Activated CD4-positive, alpha-beta memory T cell treated with anti-CD3 and anti-CD28 coated beads for 36 hours (primary cell): ENCODE measurements at regions of chr9 and their contacts with region 1.

Region 1: GRCh38 chr9:36008774-36009300 is 27.9 kb upstream of the RECK start:
- DNase-seq: peak; percentile 72
- H3K4me3 Mint-ChIP-seq: no peak overlapping the region
- H3K27ac Mint-ChIP-seq: no peak overlapping the region
- H3K4me1 Mint-ChIP-seq: peaks cover 26% of the 10 kb centered on the region
- H3K27me3 Mint-ChIP-seq: peaks cover 28% of the 10 kb centered on the region

Region 2: GRCh38 chr9:35903049-35903448 is 105.8 kb before region 1 on chr9:
- CTCF ChIA-PET with region 1: interaction called, 11 read pairs
- POLR2A ChIA-PET with region 1: no interaction called
- intact Hi-C with region 1: no loop called
- DNase-seq: peak; percentile 31
- H3K4me3 Mint-ChIP-seq: no peak overlapping the region
- H3K27ac Mint-ChIP-seq: no peak overlapping the region
- H3K4me1 Mint-ChIP-seq: peaks cover 25% of the 10 kb centered on the region
- H3K27me3 Mint-ChIP-seq: peaks cover 4% of the 10 kb centered on the region

Region 3: GRCh38 chr9:35954942-35955546 is 53.8 kb before region 1 on chr9:
- CTCF ChIA-PET with region 1: interaction called, 25 read pairs
- POLR2A ChIA-PET with region 1: no interaction called
- intact Hi-C with region 1: loop called (anchors 5 kb)
- DNase-seq: peak; percentile 59
- H3K4me3 Mint-ChIP-seq: no peak overlapping the region
- H3K27ac Mint-ChIP-seq: no peak overlapping the region
- H3K4me1 Mint-ChIP-seq: peaks cover 6% of the 10 kb centered on the region
- H3K27me3 Mint-ChIP-seq: peaks cover 2% of the 10 kb centered on the region

Region 4: DNA sequence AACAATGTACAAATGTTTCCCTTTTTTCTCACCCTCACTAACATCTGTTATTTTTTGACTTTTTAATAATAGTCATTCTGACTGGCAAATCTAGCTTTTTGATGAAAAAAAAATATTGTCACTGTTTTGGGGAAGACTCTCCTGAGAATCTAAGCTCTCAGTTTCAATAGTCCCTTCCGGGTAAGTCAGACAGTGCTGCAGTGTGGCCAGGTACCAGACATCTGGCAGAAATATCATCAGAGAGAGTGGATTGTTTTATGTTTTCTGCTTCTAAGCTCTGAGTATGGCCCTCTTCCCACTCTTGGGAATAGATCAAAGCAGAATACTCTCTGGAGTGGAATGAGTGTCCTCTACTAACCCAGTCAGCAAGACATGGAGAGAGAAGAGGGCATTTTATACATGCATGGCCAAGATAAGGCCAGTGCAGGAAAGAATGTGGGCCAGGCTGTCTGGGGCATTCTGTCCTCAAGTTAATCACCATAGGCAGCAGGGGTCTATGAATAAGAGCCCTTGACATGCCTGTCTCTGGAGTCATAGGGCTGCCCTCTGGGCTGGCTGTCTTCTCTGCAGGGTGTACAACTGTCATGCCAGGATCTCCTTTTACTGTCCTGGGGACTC is 12.4 kb before region 1 on chr9:
- CTCF ChIA-PET with region 1: interaction called, 25 read pairs
- POLR2A ChIA-PET with region 1: no interaction called
- intact Hi-C with region 1: no loop called
- DNase-seq: no peak
- H3K4me3 Mint-ChIP-seq: no peak overlapping the region
- H3K27ac Mint-ChIP-seq: no peak overlapping the region
- H3K4me1 Mint-ChIP-seq: no peaks in the 10 kb centered on the region
- H3K27me3 Mint-ChIP-seq: peaks cover 21% of the 10 kb centered on the region

Region 5: DNA sequence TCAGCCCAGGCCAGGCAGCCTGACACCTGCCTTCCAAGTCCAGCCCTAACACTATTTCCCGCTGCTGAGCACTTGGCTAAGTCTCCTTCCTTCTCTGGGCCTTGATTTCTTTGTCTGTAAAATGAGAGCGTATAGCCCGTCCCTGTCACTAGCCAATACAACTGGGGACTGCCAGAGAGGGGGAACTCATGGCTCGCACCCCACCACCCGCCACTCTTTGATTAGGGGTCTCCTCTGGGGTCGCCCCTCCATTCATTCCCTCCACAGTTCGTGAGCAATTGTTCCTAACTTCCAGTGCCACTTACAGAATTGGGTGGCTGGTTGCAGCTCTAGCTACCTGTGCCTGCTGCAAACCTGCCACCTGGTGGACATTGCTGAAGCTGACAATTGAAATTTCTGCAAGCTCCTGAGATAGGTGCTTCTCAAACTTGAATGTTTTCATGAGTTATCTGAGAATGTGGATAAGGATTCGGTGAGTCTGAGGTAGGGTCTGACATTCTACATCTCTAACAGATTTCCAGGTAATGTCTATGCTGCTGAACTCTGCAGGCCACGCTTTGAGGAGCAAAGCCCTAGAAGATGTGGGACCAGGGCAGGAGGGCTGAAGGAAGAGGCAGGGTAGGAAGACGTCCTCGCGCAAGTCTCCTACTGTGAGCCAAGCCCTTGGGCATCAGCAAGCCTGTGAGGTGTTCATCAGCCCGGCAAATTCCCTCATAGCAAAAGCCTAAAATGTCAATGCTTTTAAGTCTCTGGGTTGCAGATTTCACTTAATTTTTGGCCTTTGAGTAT is 14.6 kb after region 1 on chr9:
- CTCF ChIA-PET with region 1: interaction called, 112 read pairs
- POLR2A ChIA-PET with region 1: no interaction called
- intact Hi-C with region 1: loop called (anchors 2 kb)
- DNase-seq: peak; percentile 77
- H3K4me3 Mint-ChIP-seq: no peak overlapping the region
- H3K27ac Mint-ChIP-seq: no peak overlapping the region
- H3K4me1 Mint-ChIP-seq: no peaks in the 10 kb centered on the region
- H3K27me3 Mint-ChIP-seq: no peaks in the 10 kb centered on the region

Region 6: DNA sequence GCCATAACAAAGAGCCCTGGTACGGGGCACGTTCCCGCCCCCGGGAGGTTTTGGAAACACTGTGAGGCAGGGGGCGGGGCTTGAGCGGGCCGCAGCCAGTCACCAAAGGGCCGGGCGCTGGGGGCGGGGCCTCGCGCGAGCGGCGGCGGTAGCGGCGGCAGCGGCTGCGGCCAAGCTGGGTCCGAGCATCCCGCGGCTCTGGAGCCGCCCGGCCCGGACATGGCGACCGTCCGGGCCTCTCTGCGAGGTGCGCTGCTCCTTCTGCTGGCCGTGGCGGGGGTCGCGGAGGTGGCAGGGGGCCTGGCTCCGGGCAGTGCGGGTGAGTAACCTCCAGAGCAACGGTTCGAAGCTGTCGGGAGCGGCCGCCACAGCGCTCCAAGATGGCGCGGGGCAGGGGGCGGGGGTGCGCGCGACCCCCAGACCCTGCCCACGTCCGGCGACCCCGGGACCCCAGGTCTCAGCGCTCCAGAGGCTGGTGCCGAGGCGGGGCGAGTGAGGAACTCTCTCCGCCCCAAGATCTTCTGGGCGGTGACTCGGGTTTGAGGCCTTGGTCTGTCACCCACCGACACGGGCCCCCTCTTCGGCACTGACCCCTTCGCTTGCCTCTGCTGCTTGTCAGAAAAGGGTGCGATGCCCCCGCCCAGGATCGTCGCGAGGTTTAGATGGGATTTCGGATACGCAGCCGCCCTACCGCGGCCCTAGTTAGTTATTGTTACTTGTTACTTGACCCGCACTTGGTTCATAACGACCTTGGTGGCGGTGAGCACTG is 28.1 kb after region 1 on chr9 and contains the start of gene RECK:
- CTCF ChIA-PET with region 1: interaction called, 26 read pairs
- POLR2A ChIA-PET with region 1: no interaction called
- intact Hi-C with region 1: loop called (anchors 2 kb)
- DNase-seq: peak; percentile 93
- H3K4me3 Mint-ChIP-seq: peak within 1 kb of the TSS; percentile 81
- H3K27ac Mint-ChIP-seq: peak within 1 kb of the TSS; percentile 2
- H3K4me1 Mint-ChIP-seq: peaks cover 37% of the 10 kb centered on the region
- H3K27me3 Mint-ChIP-seq: peaks cover under 1% of the 10 kb centered on the region
- total RNA-seq, gene RECK: 6.1 to 7.2 TPM

Region 7: DNA sequence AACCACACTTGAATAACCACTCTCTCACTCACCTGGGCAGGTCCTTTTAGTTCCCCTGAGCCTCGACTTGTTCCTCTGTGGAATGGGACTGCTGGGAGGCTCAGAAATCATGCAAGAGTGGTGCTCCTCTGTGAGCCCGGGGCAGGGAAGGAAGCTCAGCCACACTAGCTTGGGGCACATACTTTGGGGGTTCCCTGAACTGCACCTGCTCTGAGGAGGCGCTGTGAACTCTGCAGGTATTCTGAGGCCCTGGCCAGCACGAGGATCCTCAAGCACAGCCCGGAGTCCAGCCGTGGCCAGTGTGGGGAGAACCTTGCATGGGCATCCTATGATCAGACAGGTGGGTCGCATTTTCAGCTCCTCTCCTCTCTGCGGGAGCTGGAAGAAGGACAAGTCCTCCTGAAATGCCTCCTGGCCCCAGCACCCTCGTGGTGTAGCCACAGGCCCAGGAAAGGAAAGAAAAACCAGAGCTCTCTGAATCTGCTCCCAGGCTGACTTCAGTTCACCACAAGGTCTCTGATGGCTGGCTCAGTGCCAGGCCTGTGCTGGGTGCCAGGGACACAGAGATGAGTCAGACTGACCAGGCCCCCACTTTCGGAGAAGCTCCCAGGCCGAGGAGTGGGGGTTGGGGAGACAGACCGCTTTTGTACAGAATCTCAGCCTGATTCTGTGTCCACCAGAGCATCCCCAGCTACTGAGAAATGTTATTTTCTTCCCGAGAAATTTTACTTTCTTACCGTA is 139.6 kb after region 1 on chr9:
- CTCF ChIA-PET with region 1: no interaction called
- POLR2A ChIA-PET with region 1: no interaction called
- intact Hi-C with region 1: loop called (anchors 5 kb)
- DNase-seq: peak; percentile 88
- H3K4me3 Mint-ChIP-seq: no peak overlapping the region
- H3K27ac Mint-ChIP-seq: peak overlapping the region; percentile 30
- H3K4me1 Mint-ChIP-seq: peaks cover 84% of the 10 kb centered on the region
- H3K27me3 Mint-ChIP-seq: no peaks in the 10 kb centered on the region

Region 8: GRCh38 chr9:36407122-36407723 is 398.4 kb after region 1 on chr9:
- CTCF ChIA-PET with region 1: no interaction called
- POLR2A ChIA-PET with region 1: no interaction called
- intact Hi-C with region 1: no loop called
- DNase-seq: peak; percentile 77
- H3K4me3 Mint-ChIP-seq: no peak overlapping the region
- H3K27ac Mint-ChIP-seq: peak overlapping the region; percentile 67
- H3K4me1 Mint-ChIP-seq: peaks cover 10% of the 10 kb centered on the region
- H3K27me3 Mint-ChIP-seq: no peaks in the 10 kb centered on the region